ENCODE measurements at regions of chr20 and their contacts with region 1.

Region 1: GRCh38 chr20:38337561-38338140 is 8.6 kb upstream of the LBP start:
- DNase-seq: peak; percentile 73 to 79
- H3K4me3 ChIP-seq: no peak overlapping the region
- H3K4me3 Mint-ChIP-seq: no peak overlapping the region
- H3K27ac Mint-ChIP-seq: no peak overlapping the region
- H3K4me1 ChIP-seq: peaks cover 1% of the 10 kb centered on the region; the same call in 1 of the 2 replicates
- H3K4me1 Mint-ChIP-seq: peaks cover 5% of the 10 kb centered on the region
- H3K27me3 ChIP-seq: no peaks in the 10 kb centered on the region
- H3K27me3 Mint-ChIP-seq: peaks cover 6% of the 10 kb centered on the region
- CTCF ChIP-seq: peak; percentile 66 to 75

Region 2: DNA sequence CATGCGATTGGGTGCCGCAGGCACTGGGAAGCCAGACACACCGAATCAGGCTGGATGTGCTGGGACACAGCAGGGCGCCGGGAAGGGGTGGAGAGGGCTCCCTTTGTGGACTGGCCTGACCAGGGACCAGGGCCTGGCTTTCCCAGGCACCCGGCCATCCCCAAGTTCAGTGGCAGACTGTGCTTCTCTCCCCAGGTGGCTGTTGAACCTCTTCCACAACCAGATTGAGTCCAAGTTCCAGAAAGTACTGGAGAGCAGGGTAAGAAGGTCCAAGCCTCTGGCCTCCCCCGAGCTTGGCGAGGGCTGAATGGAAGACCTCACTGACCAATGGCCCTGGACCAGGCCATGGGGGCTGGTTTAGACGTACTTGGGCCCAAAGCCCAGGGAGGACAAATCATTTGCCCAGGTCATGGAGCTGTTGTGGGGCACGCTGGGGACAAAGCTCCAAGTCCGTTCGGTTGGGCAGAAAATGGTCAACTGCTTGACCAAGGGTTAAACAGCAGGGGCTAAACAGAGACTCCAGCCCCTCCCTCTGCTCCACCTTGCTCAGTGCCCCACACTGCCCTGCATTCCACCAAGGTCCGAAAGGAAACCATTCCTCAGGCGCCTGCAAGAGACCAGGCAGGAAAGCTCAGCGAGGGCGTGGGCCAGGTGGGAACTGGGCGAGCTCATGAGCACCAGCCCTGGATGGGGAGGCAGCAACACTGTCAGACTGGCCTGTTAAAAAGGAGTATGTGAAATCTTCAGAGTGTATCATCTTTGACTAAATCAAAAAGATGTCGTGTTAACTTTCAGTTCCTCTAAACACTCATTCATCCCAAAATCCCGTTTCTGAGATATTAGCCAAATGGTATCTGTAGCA is 17.7 kb after region 1 on chr20:
- CTCF ChIA-PET with region 1: interaction called, 10 read pairs
- POLR2A ChIA-PET with region 1: no interaction called
- intact Hi-C with region 1: no loop called
- DNase-seq: peak; percentile 36 to 62
- H3K4me3 ChIP-seq: no peak overlapping the region
- H3K4me3 Mint-ChIP-seq: no peak overlapping the region
- H3K27ac Mint-ChIP-seq: no peak overlapping the region
- H3K4me1 ChIP-seq: no peaks in the 10 kb centered on the region
- H3K4me1 Mint-ChIP-seq: no peaks in the 10 kb centered on the region
- H3K27me3 ChIP-seq: no peaks in the 10 kb centered on the region
- H3K27me3 Mint-ChIP-seq: no peaks in the 10 kb centered on the region
- CTCF ChIP-seq: no peak

Region 3: GRCh38 chr20:38387953-38388352 is 50.3 kb after region 1 on chr20:
- CTCF ChIA-PET with region 1: interaction called, 4 read pairs
- POLR2A ChIA-PET with region 1: no interaction called
- intact Hi-C with region 1: loop called (anchors 5 kb)
- DNase-seq: peak in 1 of 2 experiments; percentile 20
- H3K4me3 ChIP-seq: no peak overlapping the region
- H3K4me3 Mint-ChIP-seq: no peak overlapping the region
- H3K27ac Mint-ChIP-seq: no peak overlapping the region
- H3K4me1 ChIP-seq: no peaks in the 10 kb centered on the region
- H3K4me1 Mint-ChIP-seq: no peaks in the 10 kb centered on the region
- H3K27me3 ChIP-seq: peaks cover 2% of the 10 kb centered on the region; the same call in 1 of the 2 replicates
- H3K27me3 Mint-ChIP-seq: no peaks in the 10 kb centered on the region
- CTCF ChIP-seq: peak in 1 of 2 experiments; percentile 30

Region 4: DNA sequence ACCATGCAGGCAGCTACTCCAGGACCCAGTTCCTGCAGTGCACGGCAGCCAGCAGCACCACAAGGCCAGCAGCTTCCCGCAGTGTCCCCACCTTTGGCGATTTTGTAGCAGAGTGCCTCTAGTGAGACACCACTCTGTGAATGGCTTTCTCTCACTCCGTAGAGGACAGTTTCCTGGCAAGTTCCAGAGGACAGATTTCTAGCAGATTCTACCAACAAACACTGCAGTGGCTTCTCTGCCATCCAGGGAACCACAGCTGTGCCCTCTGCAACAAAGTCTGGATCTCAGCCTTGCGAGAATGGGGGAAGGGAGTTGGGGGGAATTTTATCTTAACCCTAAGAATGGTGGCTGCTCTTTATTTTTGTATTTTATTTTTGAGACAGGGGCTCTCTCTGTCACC is 68.8 kb after region 1 on chr20:
- CTCF ChIA-PET with region 1: interaction called, 170 read pairs
- POLR2A ChIA-PET with region 1: interaction called, 3 read pairs
- intact Hi-C with region 1: loop called (anchors 1 kb)
- DNase-seq: peak in 1 of 2 experiments; percentile 33
- H3K4me3 ChIP-seq: no peak overlapping the region
- H3K4me3 Mint-ChIP-seq: no peak overlapping the region
- H3K27ac Mint-ChIP-seq: no peak overlapping the region
- H3K4me1 ChIP-seq: peaks cover 11% of the 10 kb centered on the region; the same call in 1 of the 2 replicates
- H3K4me1 Mint-ChIP-seq: peaks cover 13% of the 10 kb centered on the region
- H3K27me3 ChIP-seq: no peaks in the 10 kb centered on the region
- H3K27me3 Mint-ChIP-seq: no peaks in the 10 kb centered on the region
- CTCF ChIP-seq: no peak